ENCODE measurements at regions of chr5 and their contacts with region 1.

Region 1: GRCh38 chr5:56012281-56012963 is 17.7 kb upstream of the IL6ST start:
- DNase-seq: peak; percentile 70
- H3K4me3 Mint-ChIP-seq: peak overlapping the region; percentile 13
- H3K27ac Mint-ChIP-seq: peak overlapping the region; percentile 85
- H3K4me1 Mint-ChIP-seq: peaks cover 38% of the 10 kb centered on the region
- H3K27me3 Mint-ChIP-seq: no peaks in the 10 kb centered on the region

Region 2: GRCh38 chr5:55903121-55903701 is 109.2 kb before region 1 on chr5:
- CTCF ChIA-PET with region 1: no interaction called
- POLR2A ChIA-PET with region 1: no interaction called
- DNase-seq: peak; percentile 70
- H3K4me3 Mint-ChIP-seq: peak overlapping the region; percentile 1
- H3K27ac Mint-ChIP-seq: no peak overlapping the region
- H3K4me1 Mint-ChIP-seq: peaks cover 28% of the 10 kb centered on the region
- H3K27me3 Mint-ChIP-seq: peaks cover 8% of the 10 kb centered on the region

Region 3: GRCh38 chr5:55982094-55982493 is 30.3 kb before region 1 on chr5:
- CTCF ChIA-PET with region 1: interaction called, 3 read pairs
- POLR2A ChIA-PET with region 1: interaction called, 11 read pairs
- DNase-seq: no peak
- H3K4me3 Mint-ChIP-seq: no peak overlapping the region
- H3K27ac Mint-ChIP-seq: no peak overlapping the region
- H3K4me1 Mint-ChIP-seq: peaks cover 77% of the 10 kb centered on the region
- H3K27me3 Mint-ChIP-seq: no peaks in the 10 kb centered on the region

Measured in activated CD4-positive, alpha-beta T cell treated with anti-CD3 and anti-CD28 coated beads, Interleukin-2, amount 10 ng/mL, durations not matched to agents 7 days and 5 days (primary cell).